Ascending aorta (tissue), 2 donors: ENCODE measurements at regions of chr3 and their contacts with region 1.

Region 1: GRCh38 chr3:33218446-33219174 is at the start of gene SUSD5:
- DNase-seq: peak in 1 of 2 donors; percentile 69
- H3K4me3 ChIP-seq: peak within 1 kb of the TSS; percentile 77 to 79
- H3K27ac ChIP-seq: peak within 1 kb of the TSS; percentile 89 to 90
- H3K4me1 ChIP-seq: peaks cover 0 to 7% of the 10 kb centered on the region in 2 donors
- H3K27me3 ChIP-seq: no peaks in the 10 kb centered on the region
- CTCF ChIP-seq: no peak
- total RNA-seq, gene SUSD5: 68.0 TPM

Region 2: GRCh38 chr3:32865405-32865804 is 353.2 kb before region 1 on chr3:
- intact Hi-C with region 1: no loop called
- DNase-seq: no peak
- H3K4me3 ChIP-seq: no peak overlapping the region
- H3K27ac ChIP-seq: no peak overlapping the region
- H3K4me1 ChIP-seq: no peaks in the 10 kb centered on the region
- H3K27me3 ChIP-seq: no peaks in the 10 kb centered on the region
- CTCF ChIP-seq: no peak

Region 3: GRCh38 chr3:33131331-33132018 is 87.1 kb before region 1 on chr3:
- intact Hi-C with region 1: loop called (anchors 2 kb)
- DNase-seq: no peak
- H3K4me3 ChIP-seq: no peak overlapping the region
- H3K27ac ChIP-seq: peak overlapping the region; percentile 21 to 43
- H3K4me1 ChIP-seq: peaks cover 0 to 11% of the 10 kb centered on the region in 2 donors
- H3K27me3 ChIP-seq: no peaks in the 10 kb centered on the region
- CTCF ChIP-seq: peak; percentile 71 to 78 (median 75)

Region 4: GRCh38 chr3:33146791-33147445 is 71.7 kb before region 1 on chr3:
- intact Hi-C with region 1: loop called (anchors 5 kb)
- DNase-seq: no peak
- H3K4me3 ChIP-seq: no peak overlapping the region
- H3K27ac ChIP-seq: peak overlapping the region; percentile 70 to 87
- H3K4me1 ChIP-seq: peaks cover 7 to 43% of the 10 kb centered on the region in 2 donors
- H3K27me3 ChIP-seq: no peaks in the 10 kb centered on the region
- CTCF ChIP-seq: peak in 1 of 3 experiments; percentile 12

Region 5: DNA sequence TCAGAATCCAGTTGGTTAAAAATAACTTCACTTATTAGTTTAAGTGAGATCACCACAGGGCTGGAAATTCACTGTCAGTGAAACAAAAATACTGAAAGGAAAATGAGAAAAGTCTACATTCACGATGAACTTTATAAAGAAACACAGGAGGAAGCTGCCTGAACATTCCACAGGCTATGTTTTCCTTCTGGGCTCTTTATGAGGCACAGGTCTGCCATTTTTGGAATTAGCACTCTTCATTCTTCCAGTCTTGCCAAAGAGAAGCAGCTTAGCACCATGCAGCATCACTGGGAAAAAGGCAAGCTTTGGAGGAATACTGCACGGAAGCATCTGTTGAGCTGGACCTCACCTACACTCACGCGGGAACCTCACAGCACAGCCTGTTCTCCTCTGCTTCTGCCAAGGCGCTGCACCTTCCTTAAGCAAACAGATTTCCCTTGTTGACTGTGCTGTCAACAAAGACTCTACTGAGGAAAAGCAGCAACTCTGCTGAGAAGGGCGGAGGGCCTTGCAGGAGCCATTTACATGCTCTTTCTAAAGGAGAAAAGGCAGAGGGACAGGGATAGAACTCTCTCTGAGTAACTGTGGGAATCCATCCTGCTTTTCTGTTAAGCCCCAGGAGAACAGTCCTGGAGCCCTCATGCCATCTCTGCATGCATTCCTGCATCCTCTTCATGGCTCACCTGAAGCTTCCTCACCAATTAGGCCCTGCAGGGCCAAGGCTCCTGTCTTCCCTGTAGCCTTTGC is 15.7 kb before region 1 on chr3:
- intact Hi-C with region 1: no loop called
- DNase-seq: peak in 1 of 2 donors; percentile 69
- H3K4me3 ChIP-seq: no peak overlapping the region
- H3K27ac ChIP-seq: peak overlapping the region; percentile 90 to 91
- H3K4me1 ChIP-seq: peaks cover 18 to 41% of the 10 kb centered on the region in 2 donors
- H3K27me3 ChIP-seq: no peaks in the 10 kb centered on the region
- CTCF ChIP-seq: no peak

Region 6: GRCh38 chr3:33277193-33277882 is 58.7 kb after region 1 on chr3 and contains the start of gene FBXL2:
- intact Hi-C with region 1: loop called (anchors 10 kb)
- DNase-seq: peak in 1 of 2 donors; percentile 78
- H3K4me3 ChIP-seq: peak within 1 kb of the TSS; percentile 87 to 99
- H3K27ac ChIP-seq: peak within 1 kb of the TSS; percentile 66 to 82
- H3K4me1 ChIP-seq: no peaks in the 10 kb centered on the region
- H3K27me3 ChIP-seq: no peaks in the 10 kb centered on the region
- CTCF ChIP-seq: no peak
- total RNA-seq, gene FBXL2: 33.4 TPM

Region 7: GRCh38 chr3:33372218-33373081 is 153.8 kb after region 1 on chr3:
- intact Hi-C with region 1: loop called (anchors 5 kb)
- DNase-seq: no peak
- H3K4me3 ChIP-seq: peak overlapping the region in 1 of 2 donors; percentile 19
- H3K27ac ChIP-seq: peak overlapping the region in 1 of 2 donors; percentile 49
- H3K4me1 ChIP-seq: no peaks in the 10 kb centered on the region
- H3K27me3 ChIP-seq: no peaks in the 10 kb centered on the region
- CTCF ChIP-seq: peak; percentile 86 to 91 (median 90)

Region 8: DNA sequence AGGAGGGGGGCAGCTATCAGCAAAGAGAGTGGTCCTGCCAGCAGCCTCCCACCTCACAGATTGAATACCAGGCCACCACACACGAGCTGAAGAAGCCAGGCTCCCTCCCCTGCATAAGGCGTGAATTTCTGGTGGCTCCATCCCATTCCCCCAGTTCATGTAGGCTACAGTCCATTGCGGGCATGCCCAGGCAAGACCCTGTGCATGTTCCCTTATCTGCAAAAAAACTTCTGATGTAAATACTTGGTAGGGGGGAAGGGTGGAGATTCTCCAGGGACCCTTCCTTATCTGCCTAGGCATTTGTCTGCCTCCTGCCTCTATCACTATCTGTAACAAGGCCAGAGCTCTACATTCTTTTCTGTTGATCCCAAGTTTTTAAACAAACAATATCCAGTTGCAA is 249.2 kb after region 1 on chr3:
- intact Hi-C with region 1: no loop called
- DNase-seq: no peak
- H3K4me3 ChIP-seq: no peak overlapping the region
- H3K27ac ChIP-seq: no peak overlapping the region
- H3K4me1 ChIP-seq: no peaks in the 10 kb centered on the region
- H3K27me3 ChIP-seq: no peaks in the 10 kb centered on the region
- CTCF ChIP-seq: no peak